Left lung (tissue), 14 donors: ENCODE measurements at regions of chr4 and their contacts with region 1.

Region 1: DNA sequence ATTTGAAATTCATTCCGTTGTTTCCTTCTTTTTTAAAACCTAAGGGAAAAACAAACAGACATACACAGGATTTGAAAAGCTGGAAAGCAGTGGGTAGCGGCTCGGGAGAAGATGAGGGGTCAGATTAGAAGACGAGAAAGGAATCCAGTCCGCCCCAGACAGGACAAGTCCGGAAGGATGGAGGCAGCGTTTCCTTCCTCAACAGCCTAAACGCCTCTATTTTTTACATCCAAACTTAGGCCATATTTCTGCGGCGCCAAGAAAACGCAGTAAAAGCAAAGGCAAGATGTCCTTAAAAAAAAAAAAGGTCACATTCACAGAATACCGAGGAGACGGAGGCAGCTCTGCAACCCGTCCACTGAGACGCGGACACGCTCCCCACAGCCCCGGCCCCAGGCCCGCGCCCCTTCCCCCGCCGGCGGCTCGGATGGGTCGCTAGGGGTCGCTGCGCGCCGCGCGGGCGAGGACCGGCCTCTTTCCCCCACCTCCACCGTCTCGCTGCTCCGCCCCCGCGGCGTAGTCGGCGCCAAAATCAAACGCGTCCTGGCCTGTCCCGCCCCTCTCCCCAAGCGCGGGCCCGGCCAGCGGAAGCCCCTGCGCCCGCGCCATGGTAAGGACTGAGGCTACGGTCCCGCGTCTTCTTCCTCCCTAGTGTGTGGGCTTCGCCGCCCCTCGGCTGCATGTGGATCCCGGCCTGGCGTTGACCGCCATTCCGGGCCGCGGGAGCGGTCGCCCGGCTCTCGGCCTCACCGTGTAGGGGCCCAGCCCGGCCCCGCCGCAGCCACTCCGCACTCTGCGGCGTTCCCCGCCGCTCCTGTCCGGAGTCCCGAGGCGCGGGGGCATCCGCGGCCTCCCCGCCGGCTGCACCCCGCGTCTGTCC is at the start of gene MND1:
- DNase-seq: peak; percentile 89 to 96 (median 92)
- ATAC-seq: peak; percentile 98
- H3K4me3 ChIP-seq: peak within 1 kb of the TSS; percentile 80 to 84
- H3K27ac ChIP-seq: no peak within 1 kb of the TSS
- H3K4me1 ChIP-seq: peaks cover 4 to 28% of the 10 kb centered on the region in 2 donors
- H3K27me3 ChIP-seq: no peaks in the 10 kb centered on the region
- CTCF ChIP-seq: peak; percentile 85 to 98
- polyA plus RNA-seq, gene MND1: 8.8 to 19.2 (median 11.3) TPM

Region 2: DNA sequence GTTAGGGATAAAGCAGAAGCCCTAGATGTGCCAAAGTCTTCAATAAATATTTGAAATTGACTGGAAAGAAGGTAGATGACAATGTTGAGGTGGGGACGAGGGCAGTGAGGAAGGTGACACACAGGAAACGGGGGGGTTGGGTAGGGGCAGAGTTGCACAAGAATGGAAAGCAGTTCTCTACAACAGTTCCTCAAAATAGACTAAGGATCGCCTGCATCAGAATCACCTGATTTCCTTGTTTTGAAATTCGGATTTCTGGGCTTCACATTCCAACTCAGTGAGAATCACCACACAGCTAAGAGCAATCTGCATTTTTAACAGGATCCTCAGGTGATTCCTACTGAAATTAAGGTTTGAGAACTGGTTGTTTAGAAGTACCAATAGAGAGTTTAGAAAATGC is 494.0 kb before region 1 on chr4:
- intact Hi-C with region 1: no loop called
- DNase-seq: peak; percentile 5 to 70 (median 34)
- ATAC-seq: peak; percentile 90
- H3K4me3 ChIP-seq: no peak overlapping the region
- H3K27ac ChIP-seq: peak overlapping the region; percentile 58 to 74
- H3K4me1 ChIP-seq: peaks cover 0 to 36% of the 10 kb centered on the region in 2 donors
- H3K27me3 ChIP-seq: no peaks in the 10 kb centered on the region
- CTCF ChIP-seq: no peak

Region 3: DNA sequence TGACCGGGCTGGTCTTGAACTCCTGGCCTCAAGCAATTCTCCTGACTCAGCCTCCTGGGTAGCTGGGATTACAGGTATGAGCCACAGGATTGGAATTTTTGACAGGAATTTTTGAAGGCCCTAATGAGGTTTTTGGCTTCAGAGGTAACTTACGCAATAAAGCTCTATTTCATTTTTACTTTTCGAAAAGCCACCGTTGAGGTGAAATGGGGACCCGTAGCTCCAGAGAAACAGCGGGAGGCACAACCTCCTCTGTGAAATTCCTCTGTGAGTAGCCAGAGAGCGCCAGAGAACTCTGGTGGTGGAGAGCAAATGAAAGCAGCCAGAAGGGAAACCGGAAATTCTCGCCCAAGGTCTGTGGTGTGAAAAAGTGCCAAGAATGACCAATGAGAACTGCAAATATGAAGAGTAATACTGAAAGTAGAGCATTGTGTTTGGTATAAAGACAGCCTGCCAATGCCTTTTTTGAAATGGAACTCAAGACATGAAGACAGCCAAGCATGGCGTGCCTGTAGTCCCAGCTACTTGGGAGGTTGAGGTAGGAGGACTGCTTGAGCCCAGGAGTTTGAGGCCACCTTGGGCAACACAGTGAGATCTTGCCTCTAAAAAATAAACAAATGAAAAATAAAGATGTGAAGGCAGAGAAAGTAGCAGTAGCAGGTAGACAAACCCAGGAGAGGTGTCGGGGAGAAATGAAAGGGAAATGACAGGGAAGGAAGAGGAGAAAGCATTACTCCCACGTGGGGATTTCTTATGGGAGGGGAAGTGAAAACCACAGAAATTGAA is 88.8 kb after region 1 on chr4:
- intact Hi-C with region 1: loop called in 1 of 2 experiments (anchors 10 kb)
- DNase-seq: peak in 2 of 4 donors; percentile 33 to 75
- ATAC-seq: peak; percentile 94
- H3K4me3 ChIP-seq: peak overlapping the region in 1 of 2 donors; percentile 38
- H3K27ac ChIP-seq: peak overlapping the region in 1 of 2 donors; percentile 68
- H3K4me1 ChIP-seq: peaks cover 0 to 17% of the 10 kb centered on the region in 2 donors
- H3K27me3 ChIP-seq: no peaks in the 10 kb centered on the region
- CTCF ChIP-seq: peak; percentile 55 to 62